Endothelial cell of umbilical vein (primary cell): ENCODE measurements at regions of chr10 and their contacts with region 1.

Region 1: DNA sequence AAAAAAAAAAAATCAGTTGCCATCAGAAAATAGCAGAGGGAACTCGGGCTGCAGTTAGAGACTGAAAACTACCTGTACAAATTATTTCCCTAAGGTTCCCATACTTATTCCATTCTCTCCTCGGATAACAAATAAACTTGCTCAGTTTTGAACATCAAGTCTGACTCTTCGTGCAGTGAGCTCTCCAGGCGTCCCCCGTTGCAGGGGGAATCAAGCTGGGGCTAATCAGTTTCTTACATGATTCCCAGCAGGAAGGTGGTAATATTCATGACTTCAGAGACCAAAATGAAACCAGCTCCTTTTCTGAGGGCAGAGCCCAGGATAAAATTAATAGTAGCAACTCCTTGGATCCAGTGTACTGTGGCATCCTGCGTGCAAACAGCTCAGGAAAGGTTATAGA is 135.3 kb downstream of the FRMD4A start:
- DNase-seq: no peak
- H3K4me3 ChIP-seq: no peak overlapping the region
- H3K27ac ChIP-seq: no peak overlapping the region
- H3K4me1 ChIP-seq: no peaks in the 10 kb centered on the region
- H3K27me3 ChIP-seq: peaks cover 24 to 43% of the 10 kb centered on the region in 2 experiments
- CTCF ChIP-seq: no peak
- POLR2A ChIP-seq: no peak

Region 2: DNA sequence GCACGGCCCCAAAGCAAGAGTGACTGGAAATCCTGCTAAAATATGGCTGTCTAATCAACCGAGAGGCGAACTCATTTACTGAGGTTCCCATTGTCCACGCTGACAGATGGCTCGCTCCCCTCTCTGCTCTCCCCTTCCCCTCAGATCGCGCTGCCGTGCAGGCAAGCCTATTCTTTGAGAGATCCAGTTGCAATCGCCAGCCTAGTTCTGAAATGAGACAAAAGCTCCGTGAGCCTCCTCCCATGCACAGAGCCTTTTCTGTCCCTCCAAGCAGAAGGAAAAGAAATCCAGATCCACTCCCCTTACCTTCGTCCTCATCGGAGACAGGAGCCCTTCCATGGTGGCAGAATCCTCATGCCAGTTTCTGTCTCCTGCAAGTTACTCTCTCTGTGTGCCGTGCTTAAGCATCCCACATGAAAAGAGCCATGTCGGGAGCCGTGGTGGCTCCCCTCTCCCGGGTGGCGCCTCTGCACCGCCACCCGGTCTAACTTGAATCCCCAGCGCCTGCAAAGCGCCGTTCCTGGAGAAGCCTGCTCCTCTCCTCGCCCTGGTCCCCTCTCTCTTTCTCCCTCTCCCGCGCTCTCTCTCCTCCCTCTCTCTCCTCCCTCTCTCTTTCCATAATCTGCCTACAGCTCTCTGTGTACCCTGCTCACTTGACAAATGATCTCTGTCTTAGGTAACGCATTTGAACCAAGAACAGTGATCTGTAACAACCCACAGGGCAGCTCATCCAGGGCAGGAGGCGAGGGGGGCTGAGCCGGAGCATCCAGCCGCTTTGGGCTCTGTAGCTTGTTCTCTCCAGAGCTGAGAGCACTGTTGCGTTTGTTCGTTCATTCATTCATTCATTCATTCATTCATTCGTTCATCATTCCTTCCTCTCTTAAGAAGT is 21.5 kb before region 1 on chr10:
- CTCF ChIA-PET with region 1: interaction called, 16 read pairs
- POLR2A ChIA-PET with region 1: no interaction called
- dilution Hi-C with region 1: no loop called
- intact Hi-C with region 1: no loop called
- DNase-seq: peak; percentile 33
- H3K4me3 ChIP-seq: peak overlapping the region; percentile 1 to 36 (median 19)
- H3K27ac ChIP-seq: no peak overlapping the region
- H3K4me1 ChIP-seq: peaks cover 5% of the 10 kb centered on the region
- H3K27me3 ChIP-seq: peaks cover 45 to 87% of the 10 kb centered on the region in 2 experiments
- CTCF ChIP-seq: no peak
- POLR2A ChIP-seq: no peak

Region 3: GRCh38 chr10:14211610-14212009 is 16.2 kb after region 1 on chr10:
- CTCF ChIA-PET with region 1: interaction called, 19 read pairs
- POLR2A ChIA-PET with region 1: interaction called, 6 read pairs
- dilution Hi-C with region 1: no loop called
- intact Hi-C with region 1: no loop called
- DNase-seq: no peak
- H3K4me3 ChIP-seq: no peak overlapping the region
- H3K27ac ChIP-seq: no peak overlapping the region
- H3K4me1 ChIP-seq: no peaks in the 10 kb centered on the region
- H3K27me3 ChIP-seq: peaks cover 7 to 9% of the 10 kb centered on the region in 2 experiments
- CTCF ChIP-seq: no peak
- POLR2A ChIP-seq: no peak

Region 4: GRCh38 chr10:14486777-14487487 is 291.5 kb after region 1 on chr10:
- CTCF ChIA-PET with region 1: interaction called, 121 read pairs
- POLR2A ChIA-PET with region 1: no interaction called
- dilution Hi-C with region 1: no loop called
- intact Hi-C with region 1: no loop called
- DNase-seq: no peak
- H3K4me3 ChIP-seq: no peak overlapping the region
- H3K27ac ChIP-seq: no peak overlapping the region
- H3K4me1 ChIP-seq: peaks cover under 1% of the 10 kb centered on the region
- H3K27me3 ChIP-seq: peaks cover 8 to 29% of the 10 kb centered on the region in 2 experiments
- CTCF ChIP-seq: no peak
- POLR2A ChIP-seq: no peak

Region 5: DNA sequence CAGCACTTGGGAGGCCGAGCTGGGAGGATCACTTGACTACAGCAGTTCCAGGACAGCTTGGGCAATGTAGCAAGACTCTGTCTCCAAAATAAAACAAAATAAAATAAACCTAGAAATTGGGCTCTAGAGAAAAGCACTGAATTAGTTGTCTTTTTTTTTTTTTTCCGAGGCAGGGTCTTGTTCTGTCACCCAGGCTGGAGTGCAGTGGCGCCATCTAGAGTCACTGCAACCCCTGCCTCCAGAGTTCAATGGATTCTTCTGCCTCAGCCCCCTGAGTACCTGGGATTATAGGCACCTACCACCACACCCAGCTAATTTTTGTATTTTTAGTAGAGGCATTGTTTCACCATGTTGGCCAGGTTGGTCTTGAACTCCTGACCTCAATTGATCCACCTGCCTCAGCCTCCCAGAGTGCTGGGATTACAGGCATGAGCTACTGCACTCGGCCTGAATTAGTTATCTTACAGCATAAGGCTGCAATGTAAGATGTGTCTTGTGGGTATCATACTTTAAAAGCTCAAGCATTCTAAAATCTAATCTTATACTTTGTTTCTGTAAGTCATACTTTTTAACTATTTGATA is 776.5 kb after region 1 on chr10:
- CTCF ChIA-PET with region 1: interaction called, 21 read pairs
- POLR2A ChIA-PET with region 1: no interaction called
- dilution Hi-C with region 1: no loop called
- intact Hi-C with region 1: no loop called
- DNase-seq: peak; percentile 33
- H3K4me3 ChIP-seq: no peak overlapping the region
- H3K27ac ChIP-seq: no peak overlapping the region
- H3K4me1 ChIP-seq: no peaks in the 10 kb centered on the region
- H3K27me3 ChIP-seq: no peaks in the 10 kb centered on the region
- CTCF ChIP-seq: peak; percentile 44 to 70
- POLR2A ChIP-seq: no peak